WTC11 (cell line): ENCODE measurements at regions of chr9 and their contacts with region 1.

Region 1: GRCh38 chr9:4679268-4680172 is at the start of gene CDC37L1:
- DNase-seq: peak; percentile 97
- ATAC-seq: peak; percentile 94
- H3K4me3 Mint-ChIP-seq: no peak within 1 kb of the TSS
- H3K27ac Mint-ChIP-seq: no peak within 1 kb of the TSS
- H3K4me1 Mint-ChIP-seq: no peaks in the 10 kb centered on the region
- H3K27me3 Mint-ChIP-seq: no peaks in the 10 kb centered on the region
- CTCF ChIP-seq: no peak; the same call in 1 of the 2 replicates
- total RNA-seq, gene CDC37L1: 16.7 to 20.1 TPM (median 18.8 TPM) in 3 replicates

Region 2: GRCh38 chr9:4662108-4662988 is 17.2 kb before region 1 on chr9 and contains the start of gene PLPP6:
- CTCF ChIA-PET with region 1: interaction called, 8 read pairs
- POLR2A ChIA-PET with region 1: interaction called, 14 read pairs
- DNase-seq: peak; percentile 95
- ATAC-seq: peak; percentile 93
- H3K4me3 Mint-ChIP-seq: peak within 1 kb of the TSS; percentile 82
- H3K27ac Mint-ChIP-seq: peak within 1 kb of the TSS; percentile 71
- H3K4me1 Mint-ChIP-seq: peaks cover 62% of the 10 kb centered on the region
- H3K27me3 Mint-ChIP-seq: no peaks in the 10 kb centered on the region; the same call in 1 of the 2 replicates
- CTCF ChIP-seq: no peak
- total RNA-seq, gene PLPP6: 13.4 to 13.5 TPM (median 13.5 TPM) in 3 replicates